ENCODE measurements at regions of chr1 and their contacts with region 1.

Region 1: DNA sequence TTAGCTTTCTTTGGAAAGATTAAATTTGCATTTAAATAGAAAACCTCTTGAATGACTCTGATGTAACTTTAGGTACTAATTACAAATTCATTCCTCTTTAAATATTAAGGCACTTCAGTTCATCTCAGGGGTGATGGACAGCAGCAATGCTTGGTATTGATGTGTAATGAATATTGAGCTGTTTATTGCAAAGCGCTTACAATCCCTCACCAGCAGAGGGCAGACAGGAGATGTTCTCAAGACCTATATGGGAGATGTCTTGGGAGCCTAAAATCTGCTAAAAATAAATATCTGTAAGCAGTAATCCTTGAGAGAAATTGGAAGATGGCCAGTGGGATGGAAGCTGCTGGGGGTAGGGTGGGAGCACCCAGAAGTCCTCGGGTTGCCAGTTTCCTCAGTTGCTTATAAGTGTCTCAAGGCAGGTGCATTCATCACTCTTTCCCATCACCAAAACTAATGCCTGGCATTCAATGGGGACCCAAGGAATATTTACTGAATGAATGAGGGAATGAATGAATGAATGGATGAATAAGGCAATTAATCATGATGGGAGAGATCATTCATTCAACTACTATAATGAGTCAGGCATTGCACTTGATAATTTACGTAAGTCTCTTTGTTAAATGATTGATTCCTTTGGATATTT is 2.3 kb downstream of the KLHDC8A start:
- DNase-seq: peak; percentile 92
- H3K4me3 Mint-ChIP-seq: no peak overlapping the region
- H3K27ac Mint-ChIP-seq: no peak overlapping the region
- H3K4me1 Mint-ChIP-seq: peaks cover 13% of the 10 kb centered on the region
- H3K27me3 Mint-ChIP-seq: peaks cover 23% of the 10 kb centered on the region
- CTCF ChIP-seq: peak; percentile 91

Region 2: GRCh38 chr1:205321164-205321958 is 33.0 kb before region 1 on chr1 and contains the start of gene NUAK2:
- CTCF ChIA-PET with region 1: interaction called, 197 read pairs
- POLR2A ChIA-PET with region 1: interaction called, 3 read pairs
- intact Hi-C with region 1: no loop called
- DNase-seq: peak; percentile 97
- H3K4me3 Mint-ChIP-seq: peak within 1 kb of the TSS; percentile 99
- H3K27ac Mint-ChIP-seq: peak within 1 kb of the TSS; percentile 54
- H3K4me1 Mint-ChIP-seq: peaks cover 56% of the 10 kb centered on the region
- H3K27me3 Mint-ChIP-seq: no peaks in the 10 kb centered on the region
- CTCF ChIP-seq: peak; percentile 64
- total RNA-seq, gene NUAK2: 2.8 and 6.0 TPM in 2 replicates

Region 3: GRCh38 chr1:205382561-205382960 is 28.2 kb after region 1 on chr1:
- CTCF ChIA-PET with region 1: interaction called, 241 read pairs
- POLR2A ChIA-PET with region 1: no interaction called
- intact Hi-C with region 1: no loop called
- DNase-seq: no peak
- H3K4me3 Mint-ChIP-seq: no peak overlapping the region
- H3K27ac Mint-ChIP-seq: no peak overlapping the region
- H3K4me1 Mint-ChIP-seq: no peaks in the 10 kb centered on the region
- H3K27me3 Mint-ChIP-seq: no peaks in the 10 kb centered on the region
- CTCF ChIP-seq: no peak

Region 4: GRCh38 chr1:205410581-205411298 is 56.4 kb after region 1 on chr1:
- CTCF ChIA-PET with region 1: interaction called, 11 read pairs
- POLR2A ChIA-PET with region 1: no interaction called
- intact Hi-C with region 1: no loop called
- DNase-seq: no peak
- H3K4me3 Mint-ChIP-seq: no peak overlapping the region
- H3K27ac Mint-ChIP-seq: no peak overlapping the region
- H3K4me1 Mint-ChIP-seq: no peaks in the 10 kb centered on the region
- H3K27me3 Mint-ChIP-seq: peaks cover 52% of the 10 kb centered on the region
- CTCF ChIP-seq: no peak

Region 5: GRCh38 chr1:205430696-205431305 is 76.4 kb after region 1 on chr1:
- CTCF ChIA-PET with region 1: interaction called, 21 read pairs
- POLR2A ChIA-PET with region 1: no interaction called
- intact Hi-C with region 1: loop called (anchors 2 kb)
- DNase-seq: peak; percentile 50
- H3K4me3 Mint-ChIP-seq: peak overlapping the region; percentile 56
- H3K27ac Mint-ChIP-seq: no peak overlapping the region
- H3K4me1 Mint-ChIP-seq: no peaks in the 10 kb centered on the region
- H3K27me3 Mint-ChIP-seq: peaks cover 56% of the 10 kb centered on the region
- CTCF ChIP-seq: peak; percentile 89

Region 6: GRCh38 chr1:205493241-205494085 is 139.1 kb after region 1 on chr1:
- CTCF ChIA-PET with region 1: interaction called, 393 read pairs
- POLR2A ChIA-PET with region 1: interaction called, 4 read pairs
- intact Hi-C with region 1: no loop called
- DNase-seq: peak; percentile 99
- H3K4me3 Mint-ChIP-seq: peak overlapping the region; percentile 53
- H3K27ac Mint-ChIP-seq: peak overlapping the region; percentile 86
- H3K4me1 Mint-ChIP-seq: peaks cover 38% of the 10 kb centered on the region
- H3K27me3 Mint-ChIP-seq: no peaks in the 10 kb centered on the region
- CTCF ChIP-seq: no peak